Caco-2 (cell line): ENCODE measurements at regions of chr1 and their contacts with region 1.

Region 1: GRCh38 chr1:240888039-240888786 is 276.3 kb upstream of the GREM2 start:
- DNase-seq: peak; percentile 59 to 70
- H3K4me3 ChIP-seq: no peak overlapping the region
- H3K4me3 Mint-ChIP-seq: no peak overlapping the region
- H3K27ac Mint-ChIP-seq: no peak overlapping the region
- H3K4me1 ChIP-seq: no peaks in the 10 kb centered on the region; the same call in 1 of the 2 replicates
- H3K4me1 Mint-ChIP-seq: no peaks in the 10 kb centered on the region
- H3K27me3 ChIP-seq: no peaks in the 10 kb centered on the region
- H3K27me3 Mint-ChIP-seq: no peaks in the 10 kb centered on the region
- CTCF ChIP-seq: peak; percentile 73 to 88

Region 2: GRCh38 chr1:240854367-240854766 is 33.8 kb before region 1 on chr1:
- CTCF ChIA-PET with region 1: no interaction called
- POLR2A ChIA-PET with region 1: no interaction called
- intact Hi-C with region 1: no loop called
- DNase-seq: no peak
- H3K4me3 ChIP-seq: no peak overlapping the region
- H3K4me3 Mint-ChIP-seq: no peak overlapping the region
- H3K27ac Mint-ChIP-seq: no peak overlapping the region
- H3K4me1 ChIP-seq: no peaks in the 10 kb centered on the region
- H3K4me1 Mint-ChIP-seq: no peaks in the 10 kb centered on the region
- H3K27me3 ChIP-seq: no peaks in the 10 kb centered on the region
- H3K27me3 Mint-ChIP-seq: no peaks in the 10 kb centered on the region
- CTCF ChIP-seq: no peak

Region 3: GRCh38 chr1:240935920-240936319 is 47.7 kb after region 1 on chr1:
- CTCF ChIA-PET with region 1: no interaction called
- POLR2A ChIA-PET with region 1: no interaction called
- intact Hi-C with region 1: no loop called
- DNase-seq: no peak
- H3K4me3 ChIP-seq: no peak overlapping the region
- H3K4me3 Mint-ChIP-seq: no peak overlapping the region
- H3K27ac Mint-ChIP-seq: no peak overlapping the region
- H3K4me1 ChIP-seq: no peaks in the 10 kb centered on the region
- H3K4me1 Mint-ChIP-seq: no peaks in the 10 kb centered on the region
- H3K27me3 ChIP-seq: no peaks in the 10 kb centered on the region
- H3K27me3 Mint-ChIP-seq: no peaks in the 10 kb centered on the region
- CTCF ChIP-seq: no peak

Region 4: DNA sequence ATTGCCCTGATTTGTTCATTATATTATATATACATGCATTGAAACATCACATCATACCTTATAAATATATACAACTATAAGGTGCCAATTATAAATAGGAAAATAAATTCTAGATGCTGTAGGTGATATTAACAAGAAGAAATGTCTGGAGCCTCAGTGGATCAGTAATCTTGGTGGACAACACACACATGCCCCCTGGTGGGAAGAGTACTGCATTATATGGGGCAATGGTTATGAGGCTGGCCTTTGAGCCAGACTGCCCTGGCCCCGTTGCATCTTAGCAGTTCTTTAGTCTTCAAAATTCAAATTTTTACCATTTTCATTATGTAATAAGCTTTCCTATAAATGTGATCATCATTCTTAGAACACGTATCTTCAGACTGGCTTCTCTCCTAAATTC is 58.7 kb after region 1 on chr1:
- CTCF ChIA-PET with region 1: interaction called, 8 read pairs
- POLR2A ChIA-PET with region 1: no interaction called
- intact Hi-C with region 1: loop called (anchors 1 kb)
- DNase-seq: peak; percentile 50 to 62
- H3K4me3 ChIP-seq: no peak overlapping the region
- H3K4me3 Mint-ChIP-seq: no peak overlapping the region
- H3K27ac Mint-ChIP-seq: no peak overlapping the region
- H3K4me1 ChIP-seq: no peaks in the 10 kb centered on the region
- H3K4me1 Mint-ChIP-seq: peaks cover 7% of the 10 kb centered on the region
- H3K27me3 ChIP-seq: no peaks in the 10 kb centered on the region
- H3K27me3 Mint-ChIP-seq: no peaks in the 10 kb centered on the region
- CTCF ChIP-seq: peak; percentile 62 to 71

Region 5: GRCh38 chr1:241408170-241408569 is 520.0 kb after region 1 on chr1:
- CTCF ChIA-PET with region 1: no interaction called
- POLR2A ChIA-PET with region 1: no interaction called
- intact Hi-C with region 1: loop called (anchors 5 kb)
- DNase-seq: peak in 1 of 2 experiments; percentile 4
- H3K4me3 ChIP-seq: no peak overlapping the region
- H3K4me3 Mint-ChIP-seq: no peak overlapping the region
- H3K27ac Mint-ChIP-seq: no peak overlapping the region
- H3K4me1 ChIP-seq: no peaks in the 10 kb centered on the region
- H3K4me1 Mint-ChIP-seq: no peaks in the 10 kb centered on the region
- H3K27me3 ChIP-seq: no peaks in the 10 kb centered on the region
- H3K27me3 Mint-ChIP-seq: peaks cover 6% of the 10 kb centered on the region
- CTCF ChIP-seq: peak; percentile 18 to 28

Region 6: GRCh38 chr1:241499910-241500309 is 611.7 kb after region 1 on chr1:
- CTCF ChIA-PET with region 1: interaction called, 4 read pairs
- POLR2A ChIA-PET with region 1: no interaction called
- intact Hi-C with region 1: loop called (anchors 2 kb)
- DNase-seq: no peak
- H3K4me3 ChIP-seq: no peak overlapping the region
- H3K4me3 Mint-ChIP-seq: no peak overlapping the region
- H3K27ac Mint-ChIP-seq: no peak overlapping the region
- H3K4me1 ChIP-seq: no peaks in the 10 kb centered on the region
- H3K4me1 Mint-ChIP-seq: no peaks in the 10 kb centered on the region
- H3K27me3 ChIP-seq: no peaks in the 10 kb centered on the region
- H3K27me3 Mint-ChIP-seq: no peaks in the 10 kb centered on the region
- CTCF ChIP-seq: peak; percentile 34 to 44